AG04450 (cell line): ENCODE measurements at regions of chr2 and their contacts with region 1.

Region 1: GRCh38 chr2:172596776-172597175 is 40.9 kb downstream of the PDK1 start:
- DNase-seq: no peak
- H3K4me3 ChIP-seq: no peak overlapping the region
- H3K27ac ChIP-seq: no peak overlapping the region
- H3K27me3 ChIP-seq: no peaks in the 10 kb centered on the region
- CTCF ChIP-seq: no peak

Region 2: DNA sequence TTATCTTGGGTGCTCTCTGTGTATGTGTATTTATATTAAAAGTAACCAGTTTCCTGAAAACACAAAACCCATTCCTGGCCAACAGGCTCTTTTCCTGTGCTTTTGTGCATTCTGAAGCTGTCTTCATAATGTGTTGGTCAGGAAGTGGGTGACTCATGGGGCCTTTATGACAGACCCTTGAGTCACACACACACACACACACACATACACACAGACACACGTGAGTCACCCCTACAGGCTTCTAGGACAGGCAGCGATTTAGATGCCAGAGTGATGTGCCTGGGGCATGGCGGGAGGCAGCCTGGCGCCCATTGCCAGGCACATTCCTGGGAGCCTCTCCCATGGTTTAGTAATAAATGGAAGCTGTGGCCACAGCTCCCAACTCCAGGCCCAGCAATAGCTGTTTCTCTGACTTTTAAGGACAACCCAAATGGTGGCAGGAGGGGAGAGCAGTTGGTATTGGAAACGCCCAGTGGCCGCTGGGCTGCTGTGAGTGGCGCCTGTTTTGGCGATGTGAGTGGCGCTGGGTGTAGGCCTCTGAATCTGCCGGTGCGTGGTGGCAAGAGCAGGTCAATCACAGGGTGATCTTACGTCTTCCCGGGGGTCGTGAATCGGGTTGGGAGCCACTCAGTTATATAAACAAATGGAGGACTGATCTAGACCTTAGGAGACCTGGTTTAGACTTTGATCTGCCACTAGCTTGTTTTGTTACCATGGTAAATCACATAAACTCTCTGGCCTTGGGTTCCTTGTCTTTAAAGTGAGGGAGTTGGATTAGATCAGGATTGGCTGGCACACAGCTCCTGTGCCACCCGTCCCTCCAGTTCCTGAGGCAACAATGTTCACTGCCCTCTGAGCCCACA is 343.4 kb before region 1 on chr2:
- CTCF ChIA-PET with region 1: no interaction called
- POLR2A ChIA-PET with region 1: no interaction called
- DNase-seq: peak; percentile 99
- H3K4me3 ChIP-seq: no peak overlapping the region
- H3K27ac ChIP-seq: peak overlapping the region; percentile 74
- H3K27me3 ChIP-seq: no peaks in the 10 kb centered on the region
- CTCF ChIP-seq: no peak

Region 3: GRCh38 chr2:172674034-172674967 is 77.5 kb after region 1 on chr2:
- CTCF ChIA-PET with region 1: interaction called, 41 read pairs
- POLR2A ChIA-PET with region 1: no interaction called
- DNase-seq: no peak
- H3K4me3 ChIP-seq: no peak overlapping the region
- H3K27ac ChIP-seq: no peak overlapping the region
- H3K27me3 ChIP-seq: no peaks in the 10 kb centered on the region
- CTCF ChIP-seq: peak; percentile 54

Region 4: DNA sequence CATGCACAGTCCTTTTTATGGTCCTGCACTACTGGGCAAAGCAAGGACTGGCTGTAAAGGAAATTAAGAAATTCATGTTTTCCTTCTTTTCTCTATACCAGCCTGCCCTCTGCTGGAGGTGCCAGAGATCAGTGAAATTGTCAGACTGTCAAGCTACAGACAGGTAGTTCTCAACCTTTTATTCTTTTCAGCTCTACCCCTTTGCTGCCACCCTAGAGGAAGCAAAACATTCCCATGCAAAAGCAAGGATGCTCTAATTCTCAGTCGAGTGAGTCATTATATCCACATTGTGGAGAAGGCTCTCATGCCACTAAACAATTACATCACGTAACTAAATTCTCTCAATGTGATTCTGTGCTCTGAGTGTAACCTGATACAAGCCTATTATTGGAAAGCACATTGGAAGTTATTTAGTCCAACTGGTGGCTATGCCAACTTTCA is 113.8 kb after region 1 on chr2:
- CTCF ChIA-PET with region 1: interaction called, 21 read pairs
- POLR2A ChIA-PET with region 1: no interaction called
- DNase-seq: peak; percentile 74
- H3K4me3 ChIP-seq: no peak overlapping the region
- H3K27ac ChIP-seq: no peak overlapping the region
- H3K27me3 ChIP-seq: no peaks in the 10 kb centered on the region
- CTCF ChIP-seq: peak; percentile 44

Region 5: GRCh38 chr2:172783091-172783898 is 186.5 kb after region 1 on chr2:
- CTCF ChIA-PET with region 1: no interaction called
- POLR2A ChIA-PET with region 1: no interaction called
- DNase-seq: peak; percentile 66
- H3K4me3 ChIP-seq: peak overlapping the region; percentile 23; the same call in 1 of the 2 replicates
- H3K27ac ChIP-seq: peak overlapping the region; percentile 68
- H3K27me3 ChIP-seq: no peaks in the 10 kb centered on the region
- CTCF ChIP-seq: peak; percentile 44